ENCODE measurements at regions of chr1 and their contacts with region 1.

Region 1: DNA sequence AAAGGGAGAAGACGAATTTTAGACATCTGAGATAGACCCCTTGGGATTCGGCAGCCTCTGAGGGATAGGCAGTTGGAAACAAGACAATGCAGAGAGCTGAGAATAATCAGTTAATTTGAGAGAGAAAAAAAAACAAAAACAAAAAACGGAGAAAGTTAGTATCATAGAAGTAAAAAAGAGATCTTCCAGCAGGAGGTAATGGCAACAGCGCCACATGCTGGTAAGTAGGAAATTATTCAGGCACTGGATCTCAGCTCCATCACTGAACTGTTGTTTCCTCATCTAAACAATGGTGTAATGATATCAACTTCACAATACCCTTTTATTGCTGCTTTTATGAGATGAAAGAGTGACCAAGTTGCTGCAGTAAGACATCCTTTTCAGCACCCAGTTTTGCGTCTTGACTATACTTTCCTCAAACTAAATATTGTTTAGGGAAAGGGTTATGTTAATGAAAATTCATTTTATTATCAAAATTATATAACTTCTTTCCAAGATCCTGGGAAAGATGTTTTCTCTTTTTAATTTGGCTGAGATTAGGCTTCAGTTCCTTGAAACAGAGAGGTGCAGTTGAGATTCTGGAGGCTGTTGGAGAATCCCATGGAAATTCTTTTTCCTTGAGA is 91.4 kb upstream of the KCNA3 start:
- DNase-seq: no peak
- H3K4me3 ChIP-seq: no peak overlapping the region
- H3K27ac ChIP-seq: no peak overlapping the region
- H3K4me1 ChIP-seq: no peaks in the 10 kb centered on the region
- H3K27me3 ChIP-seq: peaks cover 0 to 14% of the 10 kb centered on the region in 2 donors
- CTCF ChIP-seq: peak; percentile 62 to 77

Region 2: GRCh38 chr1:110524311-110525251 is 241.6 kb before region 1 on chr1:
- intact Hi-C with region 1: loop called (anchors 10 kb)
- DNase-seq: no peak
- H3K4me3 ChIP-seq: no peak overlapping the region
- H3K27ac ChIP-seq: no peak overlapping the region
- H3K4me1 ChIP-seq: peaks cover 0 to 5% (median 2%) of the 10 kb centered on the region in 4 donors
- H3K27me3 ChIP-seq: peaks cover 0 to 44% of the 10 kb centered on the region in 2 donors
- CTCF ChIP-seq: peak; percentile 60 to 63

Measured in tibial artery (tissue), 4 donors.